Activated CD4-positive, alpha-beta memory T cell treated with anti-CD3 and anti-CD28 coated beads for 36 hours (primary cell): ENCODE measurements at regions of chr11 and their contacts with region 1.

Region 1: DNA sequence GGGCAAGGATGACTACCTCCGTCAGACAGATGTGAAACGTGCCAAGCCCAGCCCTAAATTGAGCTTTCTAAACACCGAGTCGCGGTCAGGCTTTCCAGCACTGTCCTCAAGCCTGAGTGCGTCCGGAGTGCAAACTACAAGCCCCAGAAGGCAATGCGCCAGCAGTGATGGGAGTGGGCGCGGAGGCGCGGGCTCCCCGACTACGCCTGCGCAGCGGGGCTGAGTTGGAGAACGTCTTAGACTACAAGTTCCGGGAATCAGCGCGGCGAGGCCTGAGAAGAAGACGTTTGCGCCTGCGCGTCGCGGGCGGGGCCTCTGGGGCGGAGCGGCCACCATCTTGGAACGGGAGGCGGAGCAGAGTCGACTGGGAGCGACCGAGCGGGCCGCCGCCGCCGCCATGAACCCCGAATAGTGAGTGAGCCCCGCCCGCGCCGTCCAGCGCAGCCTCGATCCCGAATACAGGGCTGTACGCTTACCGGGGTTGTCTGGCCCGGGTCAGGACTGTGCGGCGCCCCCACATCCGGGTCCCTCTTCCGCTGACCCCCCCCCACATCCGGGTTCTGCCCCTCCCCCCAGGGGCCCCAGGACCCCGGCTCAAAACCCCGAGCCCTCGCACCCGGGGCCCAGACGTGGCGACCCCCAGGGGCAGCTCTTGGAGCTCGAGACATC is at the start of gene RAB1B:
- DNase-seq: peak; percentile 100
- H3K4me3 Mint-ChIP-seq: peak within 1 kb of the TSS; percentile 86
- H3K27ac Mint-ChIP-seq: peak within 1 kb of the TSS; percentile 90
- H3K4me1 Mint-ChIP-seq: peaks cover 32% of the 10 kb centered on the region
- H3K27me3 Mint-ChIP-seq: no peaks in the 10 kb centered on the region
- total RNA-seq, gene RAB1B: 118 to 124 TPM

Region 2: DNA sequence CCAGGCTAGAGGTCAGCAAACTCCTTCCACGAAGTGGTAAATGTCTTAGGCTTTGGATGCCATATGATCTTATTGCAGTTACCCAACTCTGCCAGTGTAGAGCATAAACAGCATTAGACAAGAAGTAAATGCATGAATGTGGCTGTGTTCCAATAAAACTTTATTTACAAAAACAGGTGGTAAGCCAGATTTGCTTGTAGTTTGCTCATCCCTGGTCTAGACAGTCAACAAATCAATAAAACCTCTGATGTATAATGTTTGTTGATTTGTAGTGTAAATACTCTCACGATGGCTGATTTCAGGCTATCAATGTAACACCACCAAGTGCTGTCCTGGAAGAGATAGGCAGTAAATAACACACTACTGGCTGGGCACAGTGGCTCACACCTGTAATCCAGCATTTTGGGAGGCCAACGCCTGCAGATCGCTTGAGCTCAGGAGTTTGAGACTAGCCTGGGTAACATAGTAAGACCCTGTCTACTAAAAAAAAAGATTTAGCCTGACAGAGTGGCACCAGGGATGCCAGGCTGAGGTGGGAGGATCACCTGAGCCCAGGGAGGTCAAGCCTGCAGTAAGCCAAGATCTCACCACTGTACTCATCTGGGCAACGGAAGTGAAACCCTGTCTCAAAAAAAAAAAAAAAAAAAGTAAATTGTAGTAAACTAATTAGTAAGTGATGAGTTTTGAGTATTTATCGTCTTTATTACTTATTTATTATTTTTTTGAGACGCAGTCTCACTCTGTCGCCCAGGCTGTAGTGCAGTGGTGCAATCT is 235.3 kb before region 1 on chr11:
- CTCF ChIA-PET with region 1: no interaction called
- POLR2A ChIA-PET with region 1: no interaction called
- intact Hi-C with region 1: no loop called
- DNase-seq: no peak
- H3K4me3 Mint-ChIP-seq: no peak overlapping the region
- H3K27ac Mint-ChIP-seq: no peak overlapping the region
- H3K4me1 Mint-ChIP-seq: no peaks in the 10 kb centered on the region
- H3K27me3 Mint-ChIP-seq: no peaks in the 10 kb centered on the region

Region 3: GRCh38 chr11:66051766-66052663 is 216.4 kb before region 1 on chr11 and contains the start of gene SF3B2:
- CTCF ChIA-PET with region 1: no interaction called
- POLR2A ChIA-PET with region 1: interaction called, 3 read pairs
- intact Hi-C with region 1: loop called (anchors 5 kb)
- DNase-seq: peak; percentile 99
- H3K4me3 Mint-ChIP-seq: peak within 1 kb of the TSS; percentile 100
- H3K27ac Mint-ChIP-seq: peak within 1 kb of the TSS; percentile 97
- H3K4me1 Mint-ChIP-seq: peaks cover 41% of the 10 kb centered on the region
- H3K27me3 Mint-ChIP-seq: peaks cover 5% of the 10 kb centered on the region
- total RNA-seq, gene SF3B2: 271 to 274 TPM

Region 4: GRCh38 chr11:66126808-66127555 is 141.4 kb before region 1 on chr11:
- CTCF ChIA-PET with region 1: no interaction called
- POLR2A ChIA-PET with region 1: no interaction called
- intact Hi-C with region 1: loop called (anchors 5 kb)
- DNase-seq: peak; percentile 80
- H3K4me3 Mint-ChIP-seq: peak overlapping the region; percentile 68
- H3K27ac Mint-ChIP-seq: peak overlapping the region; percentile 89
- H3K4me1 Mint-ChIP-seq: peaks cover 73% of the 10 kb centered on the region
- H3K27me3 Mint-ChIP-seq: no peaks in the 10 kb centered on the region

Region 5: GRCh38 chr11:66222358-66223149 is 45.9 kb before region 1 on chr11:
- CTCF ChIA-PET with region 1: interaction called, 13 read pairs
- POLR2A ChIA-PET with region 1: interaction called, 9 read pairs
- intact Hi-C with region 1: loop called (anchors 1 kb)
- DNase-seq: peak; percentile 97
- H3K4me3 Mint-ChIP-seq: peak overlapping the region; percentile 47
- H3K27ac Mint-ChIP-seq: peak overlapping the region; percentile 100
- H3K4me1 Mint-ChIP-seq: peaks cover 21% of the 10 kb centered on the region
- H3K27me3 Mint-ChIP-seq: no peaks in the 10 kb centered on the region

Region 6: DNA sequence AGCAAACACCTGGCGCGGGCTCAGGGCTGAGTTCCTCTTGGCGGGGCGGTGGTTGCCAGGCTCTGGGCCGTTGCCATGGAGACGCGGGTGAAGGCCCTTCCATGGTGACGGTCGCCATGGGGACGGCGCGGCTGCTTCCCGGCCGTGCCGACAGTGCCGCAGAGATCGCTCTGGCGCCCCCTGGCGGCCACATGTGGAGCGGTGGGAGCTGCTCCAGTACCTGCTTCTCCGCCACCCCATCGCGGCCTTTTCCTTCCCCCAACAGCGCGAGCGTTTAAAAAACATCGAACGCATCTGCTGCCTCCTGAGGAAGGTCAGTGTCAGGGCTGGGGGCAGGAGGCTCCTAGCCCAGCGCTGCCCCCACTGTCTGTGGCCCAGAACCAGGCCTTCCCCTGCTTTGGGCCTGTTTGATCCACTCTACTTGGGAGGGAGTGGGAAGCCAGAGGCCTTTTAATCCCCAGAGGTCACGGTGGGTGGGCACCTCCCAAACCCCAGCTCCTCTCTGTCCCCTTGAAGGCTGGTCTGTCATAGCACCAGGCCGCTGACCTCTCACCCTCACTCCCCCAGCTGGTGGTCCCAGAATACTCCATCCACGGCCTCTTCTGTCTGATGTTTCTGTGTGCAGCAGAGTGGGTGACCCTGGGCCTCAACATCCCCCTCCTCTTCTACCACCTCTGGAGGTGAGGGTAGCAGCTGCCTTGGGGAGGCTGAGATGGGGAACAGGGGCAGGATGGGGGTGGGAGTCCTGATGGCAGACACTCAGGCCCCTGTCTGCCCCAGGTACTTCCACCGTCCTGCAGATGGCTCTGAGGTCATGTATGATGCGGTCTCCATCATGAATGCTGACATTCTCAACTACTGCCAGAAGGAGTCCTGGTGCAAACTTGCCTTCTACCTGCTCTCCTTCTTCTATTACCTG is 14.3 kb after region 1 on chr11:
- CTCF ChIA-PET with region 1: interaction called, 22 read pairs
- POLR2A ChIA-PET with region 1: interaction called, 17 read pairs
- intact Hi-C with region 1: loop called (anchors 1 kb)
- DNase-seq: peak; percentile 98
- H3K4me3 Mint-ChIP-seq: peak overlapping the region; percentile 57
- H3K27ac Mint-ChIP-seq: peak overlapping the region; percentile 56
- H3K4me1 Mint-ChIP-seq: peaks cover 30% of the 10 kb centered on the region
- H3K27me3 Mint-ChIP-seq: no peaks in the 10 kb centered on the region

Region 7: GRCh38 chr11:66288671-66289547 is 20.5 kb after region 1 on chr11 and contains the start of gene YIF1A:
- CTCF ChIA-PET with region 1: interaction called, 22 read pairs
- POLR2A ChIA-PET with region 1: interaction called, 17 read pairs
- intact Hi-C with region 1: loop called (anchors 1 kb)
- DNase-seq: peak; percentile 99
- H3K4me3 Mint-ChIP-seq: peak within 1 kb of the TSS; percentile 87
- H3K27ac Mint-ChIP-seq: peak within 1 kb of the TSS; percentile 91
- H3K4me1 Mint-ChIP-seq: peaks cover 33% of the 10 kb centered on the region
- H3K27me3 Mint-ChIP-seq: peaks cover 12% of the 10 kb centered on the region
- total RNA-seq, gene YIF1A: 63.1 to 65.8 TPM

Region 8: DNA sequence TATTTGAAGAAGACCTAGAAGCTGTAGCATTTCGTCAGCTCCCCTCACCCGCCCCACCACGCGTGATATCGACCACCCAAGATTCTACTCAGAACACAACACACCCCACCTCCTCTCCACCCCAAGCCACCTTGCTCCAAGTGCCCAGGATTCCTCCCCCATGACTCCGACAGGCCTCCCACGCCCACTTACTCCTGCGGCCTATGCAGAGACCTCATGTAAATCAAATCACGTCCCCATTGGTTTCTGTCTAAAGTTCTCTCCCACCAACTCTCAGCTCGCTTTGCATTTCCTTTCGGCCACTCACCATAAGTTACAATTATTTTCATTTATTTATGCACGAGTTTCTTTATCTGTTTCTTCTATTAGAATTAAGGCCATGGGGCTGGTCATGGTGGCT is 34.2 kb after region 1 on chr11:
- CTCF ChIA-PET with region 1: no interaction called
- POLR2A ChIA-PET with region 1: no interaction called
- intact Hi-C with region 1: no loop called
- DNase-seq: no peak
- H3K4me3 Mint-ChIP-seq: no peak overlapping the region
- H3K27ac Mint-ChIP-seq: no peak overlapping the region
- H3K4me1 Mint-ChIP-seq: no peaks in the 10 kb centered on the region
- H3K27me3 Mint-ChIP-seq: no peaks in the 10 kb centered on the region

Region 9: DNA sequence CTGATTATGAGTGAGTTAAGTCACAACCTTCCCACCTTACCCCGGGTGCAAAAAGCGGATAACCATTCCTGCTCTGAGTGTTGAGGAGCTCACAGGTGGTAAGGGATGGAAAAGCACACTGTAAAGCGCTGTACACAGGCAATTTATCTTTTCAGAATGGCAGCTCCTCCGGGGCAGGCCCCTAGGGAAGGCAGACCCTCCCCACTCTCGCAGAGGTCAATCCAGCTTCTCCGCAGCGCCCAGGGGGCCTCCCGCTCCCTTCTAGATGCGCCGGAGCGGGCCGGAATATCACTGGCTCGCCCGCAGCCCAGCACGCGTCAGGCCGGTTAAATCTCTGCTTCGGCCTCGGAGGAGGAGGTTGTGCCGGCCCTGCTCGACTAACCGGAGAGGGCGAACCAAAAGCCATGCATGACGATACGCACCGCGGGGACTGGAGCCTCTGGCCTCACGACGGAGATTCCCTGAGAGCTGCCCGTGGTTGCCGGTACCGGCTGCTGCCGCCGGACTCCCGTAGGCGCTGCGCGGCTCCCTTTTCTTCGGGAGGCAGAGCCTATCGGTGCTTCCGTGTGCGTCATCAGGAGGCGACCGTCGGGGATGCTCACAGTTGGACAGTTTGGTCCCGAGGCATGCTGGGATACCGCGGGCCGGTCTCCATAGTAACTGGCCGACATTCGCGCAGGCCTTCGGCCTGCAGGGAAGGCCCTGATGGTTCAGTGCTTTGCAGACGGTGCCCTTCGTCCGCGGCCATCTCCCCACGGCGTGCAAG is 76.3 kb after region 1 on chr11 and contains the start of gene BRMS1:
- CTCF ChIA-PET with region 1: no interaction called
- POLR2A ChIA-PET with region 1: no interaction called
- intact Hi-C with region 1: loop called (anchors 1 kb)
- DNase-seq: peak; percentile 98
- H3K4me3 Mint-ChIP-seq: peak within 1 kb of the TSS; percentile 94
- H3K27ac Mint-ChIP-seq: peak within 1 kb of the TSS; percentile 85
- H3K4me1 Mint-ChIP-seq: peaks cover 50% of the 10 kb centered on the region
- H3K27me3 Mint-ChIP-seq: peaks cover 3% of the 10 kb centered on the region
- total RNA-seq, gene BRMS1: 29.3 to 31.2 TPM